AG04449 (cell line): ENCODE measurements at regions of chr14 and their contacts with region 1.

Region 1: DNA sequence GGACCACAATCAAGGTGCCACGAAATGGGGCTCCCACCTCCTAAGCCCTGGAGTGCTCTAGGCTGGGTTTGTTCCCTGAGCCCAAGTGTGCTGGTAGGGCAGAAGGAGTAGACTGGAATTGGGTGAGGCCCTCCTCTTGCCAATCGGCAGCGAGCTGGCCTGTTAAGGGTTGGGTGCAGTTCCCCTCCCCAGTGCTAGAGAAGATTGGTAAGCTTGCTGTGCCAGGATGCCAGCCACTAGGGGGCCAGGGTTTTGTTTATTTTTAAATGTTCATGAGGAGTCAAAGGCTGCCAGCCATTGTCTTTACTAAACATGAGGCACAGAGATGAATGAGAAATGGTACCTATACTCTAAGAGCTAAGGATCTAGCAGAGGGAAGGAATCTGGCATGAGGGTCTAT is 79.7 kb downstream of the SPTB start:
- DNase-seq: no peak
- H3K4me3 ChIP-seq: no peak overlapping the region
- CTCF ChIP-seq: peak; percentile 58

Region 2: GRCh38 chr14:64504310-64504896 is 295.6 kb before region 1 on chr14 and contains the start of gene ZBTB1:
- CTCF ChIA-PET with region 1: no interaction called
- POLR2A ChIA-PET with region 1: no interaction called
- DNase-seq: no peak
- H3K4me3 ChIP-seq: peak within 1 kb of the TSS; percentile 86
- CTCF ChIP-seq: no peak

Region 3: GRCh38 chr14:64772393-64772950 is 27.5 kb before region 1 on chr14:
- CTCF ChIA-PET with region 1: interaction called, 11 read pairs
- POLR2A ChIA-PET with region 1: no interaction called
- DNase-seq: no peak
- H3K4me3 ChIP-seq: no peak overlapping the region
- CTCF ChIP-seq: no peak

Region 4: GRCh38 chr14:64788668-64789067 is 11.3 kb before region 1 on chr14:
- CTCF ChIA-PET with region 1: interaction called, 100 read pairs
- POLR2A ChIA-PET with region 1: no interaction called
- DNase-seq: peak; percentile 88
- H3K4me3 ChIP-seq: no peak overlapping the region
- CTCF ChIP-seq: no peak

Region 5: DNA sequence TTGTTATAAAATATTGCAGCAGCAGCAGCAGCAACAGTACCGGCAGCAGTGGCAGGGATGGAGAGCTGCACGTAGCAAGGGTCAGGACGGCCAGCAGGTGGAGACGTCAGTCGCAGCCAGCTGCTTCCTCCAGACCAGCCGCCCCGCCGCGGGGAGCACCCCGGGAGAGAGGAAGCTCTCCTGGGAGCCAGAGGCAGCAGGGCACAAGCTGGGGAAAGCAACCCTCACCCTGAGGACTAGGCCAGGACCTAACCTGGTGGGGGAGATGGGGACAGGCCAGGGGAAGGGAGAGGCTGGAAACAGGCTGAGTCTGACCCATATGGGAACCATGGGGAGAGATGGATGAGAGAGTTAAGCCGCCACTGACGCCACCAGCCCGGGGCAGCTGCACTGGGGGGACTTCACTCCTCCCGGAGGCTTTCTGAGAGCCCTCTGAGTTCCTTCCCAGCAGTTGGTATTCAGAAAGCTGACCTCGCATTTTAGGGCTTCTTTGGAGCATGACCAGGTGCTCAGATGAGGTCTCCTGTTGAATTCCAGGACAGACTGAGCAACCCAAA is 23.4 kb after region 1 on chr14:
- CTCF ChIA-PET with region 1: interaction called, 148 read pairs
- POLR2A ChIA-PET with region 1: no interaction called
- DNase-seq: no peak
- H3K4me3 ChIP-seq: no peak overlapping the region
- CTCF ChIP-seq: peak; percentile 96

Region 6: DNA sequence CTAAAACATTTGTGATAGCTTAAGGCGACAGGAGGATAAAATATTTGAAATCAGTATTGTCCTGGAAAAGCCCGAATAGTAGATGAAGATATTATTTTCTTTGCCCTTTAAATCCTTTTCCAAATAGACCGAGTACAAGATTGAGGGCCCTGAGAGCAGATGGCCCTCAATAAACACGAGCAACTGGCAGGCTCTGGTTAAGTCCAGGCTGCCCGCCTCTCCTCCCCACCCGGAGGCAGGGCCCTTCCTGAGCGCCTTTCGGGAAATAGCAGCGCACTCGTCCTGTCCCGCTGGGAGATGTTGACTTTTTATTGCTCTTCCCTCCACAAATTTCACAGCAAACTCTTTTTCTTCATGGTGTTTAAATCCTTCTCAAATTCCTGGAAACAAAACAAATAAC is 353.1 kb after region 1 on chr14:
- CTCF ChIA-PET with region 1: no interaction called
- POLR2A ChIA-PET with region 1: no interaction called
- DNase-seq: no peak
- H3K4me3 ChIP-seq: no peak overlapping the region
- CTCF ChIP-seq: no peak